Cardiac septum (tissue), 1 donor: ENCODE measurements at regions of chr5 and their contacts with region 1.

Region 1: GRCh38 chr5:61408476-61409168 is 76.6 kb downstream of the ZSWIM6 start:
- DNase-seq: peak; percentile 100

Region 2: DNA sequence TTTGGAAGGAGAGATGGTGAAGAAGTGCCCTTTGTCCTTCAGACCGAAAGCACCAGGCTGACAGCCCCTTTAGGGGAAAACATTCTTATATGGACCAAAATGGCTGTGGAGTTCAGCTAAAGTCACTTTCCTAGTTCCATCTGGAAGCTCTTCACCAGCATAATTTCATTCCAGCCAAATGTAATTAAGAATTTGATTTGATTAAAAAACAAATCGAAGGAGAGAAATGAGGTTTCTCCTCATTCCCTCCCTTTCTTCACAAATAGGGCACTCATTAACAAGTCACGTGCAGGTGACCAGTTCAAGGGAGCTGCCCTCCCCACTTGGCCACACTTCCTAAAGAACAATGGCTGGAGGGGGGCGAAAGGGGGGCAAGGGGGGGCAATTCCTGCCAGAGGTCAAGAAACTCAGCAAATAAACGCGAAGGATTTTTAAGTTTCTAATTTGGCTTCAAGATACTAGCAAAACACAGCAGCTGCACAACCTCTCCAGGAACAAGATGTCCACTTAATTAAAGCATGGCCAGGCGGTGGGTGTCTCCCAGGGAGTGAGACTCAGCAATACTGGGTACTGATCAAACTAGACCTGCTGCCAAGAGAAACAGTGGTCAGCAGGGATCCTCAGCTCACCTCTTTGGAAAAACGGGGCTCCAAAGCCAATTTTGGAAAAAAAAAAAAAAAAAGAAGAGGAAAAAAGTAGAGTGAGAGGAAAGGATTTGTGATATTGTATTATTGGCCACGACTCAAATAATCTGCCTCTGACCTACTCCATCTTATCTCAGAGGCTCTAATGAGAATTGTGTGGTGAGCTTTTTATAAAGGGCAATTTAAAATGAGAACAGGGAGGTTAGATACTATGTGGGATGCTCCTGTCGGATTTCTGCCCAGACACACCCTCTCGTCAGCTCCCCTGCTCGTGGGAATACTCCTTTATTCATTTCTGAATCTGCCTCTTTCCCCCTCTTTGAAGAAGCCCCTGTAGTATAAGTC is 177.8 kb after region 1 on chr5:
- intact Hi-C with region 1: no loop called
- DNase-seq: no peak

Region 3: GRCh38 chr5:61625681-61626621 is 217.3 kb after region 1 on chr5:
- intact Hi-C with region 1: loop called (anchors 5 kb)
- DNase-seq: peak; percentile 89